Heart right ventricle (tissue), 16 donors: ENCODE measurements at regions of chr5 and their contacts with region 1.

Region 1: DNA sequence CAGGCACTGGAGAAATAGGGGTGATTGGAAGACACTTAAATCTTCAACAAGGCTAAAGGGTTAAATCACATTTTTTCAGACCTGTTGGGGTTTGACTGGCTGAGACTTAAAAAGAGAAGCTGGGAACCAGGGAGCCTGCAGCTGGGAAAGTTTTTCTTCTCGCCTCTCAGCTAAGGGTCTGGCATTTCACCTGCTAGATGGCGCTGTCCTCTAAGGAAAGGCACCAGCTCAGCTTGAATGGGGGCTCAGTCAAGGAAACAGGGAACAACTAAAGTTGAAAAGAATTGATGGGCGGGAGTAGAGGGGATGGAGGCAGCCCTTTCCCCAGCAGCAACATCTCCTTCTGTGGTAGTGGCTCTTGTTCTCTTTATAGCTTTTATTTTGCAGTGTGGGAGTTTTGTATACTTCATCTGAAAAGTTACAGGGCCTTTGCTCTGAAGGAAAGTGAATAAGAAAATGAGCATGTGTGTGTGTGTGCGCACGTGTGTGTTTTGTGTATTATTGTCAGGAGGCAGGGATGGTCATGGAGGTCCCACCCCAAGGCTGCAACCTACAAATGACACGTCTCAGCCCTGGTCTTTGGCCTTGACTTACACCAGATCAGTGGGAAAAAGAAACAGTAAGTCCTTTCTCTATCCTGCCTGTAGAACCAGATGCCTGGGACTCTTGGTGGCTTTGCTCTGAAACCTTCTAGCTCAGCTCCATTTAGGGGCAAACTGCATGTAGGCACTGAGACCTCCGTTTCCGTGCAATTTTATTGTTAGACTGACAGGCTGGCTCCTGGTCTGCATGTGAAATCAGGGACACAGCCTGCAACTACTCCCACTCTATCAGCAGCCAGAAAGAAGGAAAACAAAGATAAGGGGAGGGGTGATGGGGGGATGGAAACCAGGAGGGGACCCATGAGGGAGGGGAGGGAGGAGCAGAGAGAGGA is 316.2 kb upstream of the CLINT1 start:
- DNase-seq: peak; percentile 62 to 87
- ATAC-seq: peak; percentile 75 to 95 (median 92)
- H3K4me3 ChIP-seq: no peak overlapping the region
- H3K27ac ChIP-seq: peak overlapping the region in 9 of 10 donors; percentile 4 to 80 (median 69)
- H3K4me1 ChIP-seq: peaks cover 0 to 27% (median 14%) of the 10 kb centered on the region in 9 donors
- H3K27me3 ChIP-seq: no peaks in the 10 kb centered on the region
- CTCF ChIP-seq: peak; percentile 55 to 89 (median 81)

Region 2: DNA sequence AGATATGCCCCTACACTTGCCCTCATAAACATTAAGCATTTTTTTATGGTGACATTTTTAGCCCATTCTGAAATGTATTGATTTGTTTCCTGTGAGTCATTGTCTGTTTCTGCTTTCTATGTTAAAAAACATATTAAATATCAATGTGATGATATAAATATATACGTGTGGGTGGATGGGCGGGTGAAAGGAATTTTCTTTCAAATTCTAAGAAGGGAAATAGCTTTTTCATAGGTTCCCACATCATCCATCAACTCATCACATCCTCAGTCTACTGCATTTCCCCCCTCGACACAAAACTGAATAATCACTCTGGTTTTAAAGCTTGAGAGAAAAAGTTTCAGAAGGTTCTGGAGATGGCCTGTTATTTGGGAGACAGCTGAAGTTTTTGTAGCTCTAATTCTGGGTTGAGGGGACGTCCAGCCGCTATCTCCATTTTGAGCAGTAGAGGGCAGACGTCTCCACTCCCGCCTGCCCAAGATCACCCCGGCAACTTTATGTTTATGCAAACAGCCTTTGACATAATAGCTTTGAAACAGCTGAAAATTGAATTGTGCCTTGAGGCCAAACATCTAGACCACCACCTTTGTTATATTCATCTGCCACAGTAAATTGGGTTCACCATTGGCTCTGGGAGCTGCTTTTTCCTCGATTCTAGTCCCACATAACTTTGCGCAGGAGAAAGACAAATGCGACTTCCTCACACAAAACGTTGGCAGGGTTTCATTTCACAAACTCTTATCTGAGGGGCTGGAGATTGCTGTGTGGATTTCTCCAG is 100.0 kb before region 1 on chr5:
- intact Hi-C with region 1: loop called in 1 of 10 experiments (anchors 5 kb)
- DNase-seq: peak; percentile 28 to 62
- ATAC-seq: peak; percentile 59 to 92 (median 82)
- H3K4me3 ChIP-seq: peak overlapping the region in 8 of 10 donors; percentile 17 to 43 (median 32)
- H3K27ac ChIP-seq: peak overlapping the region in 8 of 10 donors; percentile 15 to 78 (median 52)
- H3K4me1 ChIP-seq: peaks cover 0 to 16% (median 3%) of the 10 kb centered on the region in 9 donors
- H3K27me3 ChIP-seq: no peaks in the 10 kb centered on the region
- CTCF ChIP-seq: peak; percentile 67 to 92 (median 85)

Region 3: GRCh38 chr5:158414780-158415179 is 239.6 kb after region 1 on chr5:
- intact Hi-C with region 1: loop called in 2 of 10 experiments (anchors 5 to 10 kb)
- DNase-seq: peak in 1 of 2 donors; percentile 35
- ATAC-seq: peak; percentile 71 to 91 (median 83)
- H3K4me3 ChIP-seq: no peak overlapping the region
- H3K27ac ChIP-seq: peak overlapping the region in 9 of 10 donors; percentile 1 to 60 (median 48)
- H3K4me1 ChIP-seq: peaks cover 0 to 22% (median 13%) of the 10 kb centered on the region in 9 donors
- H3K27me3 ChIP-seq: no peaks in the 10 kb centered on the region
- CTCF ChIP-seq: no peak

Region 4: DNA sequence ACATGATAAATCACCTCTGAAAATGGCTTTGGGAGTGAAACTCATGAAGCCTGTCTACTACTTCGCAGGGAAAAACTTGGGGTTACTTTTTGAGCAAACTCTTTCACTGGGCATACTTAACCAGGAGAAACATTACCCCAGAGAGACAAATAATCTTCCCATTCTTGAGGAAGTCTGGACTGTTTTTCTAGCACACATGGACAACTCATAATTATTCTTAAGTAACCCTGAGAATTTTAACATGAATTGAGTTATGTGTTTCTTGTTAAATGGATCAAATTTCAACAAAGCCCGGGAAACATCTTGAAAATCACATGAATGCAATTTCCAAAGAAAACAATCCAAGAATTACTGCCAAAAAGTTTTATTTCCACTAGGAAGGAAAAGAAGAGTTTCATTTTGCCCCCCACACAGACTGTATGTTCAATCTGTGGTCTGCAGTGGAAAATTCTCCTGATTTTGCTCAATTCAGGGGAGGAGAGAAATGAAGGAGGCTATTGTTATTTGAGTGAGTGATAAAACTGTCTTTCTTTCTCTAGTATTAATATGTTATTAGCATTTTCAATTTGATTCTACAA is 248.5 kb after region 1 on chr5:
- intact Hi-C with region 1: loop called in 2 of 10 experiments (anchors 5 to 10 kb)
- DNase-seq: no peak
- ATAC-seq: peak in 6 of 8 donors; percentile 48 to 73 (median 62)
- H3K4me3 ChIP-seq: no peak overlapping the region
- H3K27ac ChIP-seq: peak overlapping the region in 9 of 10 donors; percentile 45 to 84 (median 78)
- H3K4me1 ChIP-seq: peaks cover 0 to 43% (median 22%) of the 10 kb centered on the region in 9 donors
- H3K27me3 ChIP-seq: no peaks in the 10 kb centered on the region
- CTCF ChIP-seq: no peak

Region 5: GRCh38 chr5:158553195-158553961 is 378.2 kb after region 1 on chr5:
- intact Hi-C with region 1: loop called in 1 of 10 experiments (anchors 10 kb)
- DNase-seq: peak in 1 of 2 donors; percentile 33
- ATAC-seq: peak; percentile 27 to 78 (median 62)
- H3K4me3 ChIP-seq: no peak overlapping the region
- H3K27ac ChIP-seq: peak overlapping the region in 9 of 10 donors; percentile 42 to 73 (median 63)
- H3K4me1 ChIP-seq: peaks cover 0 to 21% (median 0%) of the 10 kb centered on the region in 9 donors
- H3K27me3 ChIP-seq: no peaks in the 10 kb centered on the region
- CTCF ChIP-seq: no peak

Region 6: GRCh38 chr5:159133041-159133741 is 958.0 kb after region 1 on chr5:
- intact Hi-C with region 1: loop called in 2 of 10 experiments (anchors 2 to 5 kb)
- DNase-seq: peak in 1 of 2 donors; percentile 16
- ATAC-seq: peak; percentile 37 to 77 (median 52)
- H3K4me3 ChIP-seq: peak overlapping the region in 4 of 10 donors; percentile 15 to 37 (median 22)
- H3K27ac ChIP-seq: peak overlapping the region in 1 of 10 donors; percentile 15
- H3K4me1 ChIP-seq: no peaks in the 10 kb centered on the region
- H3K27me3 ChIP-seq: peaks cover 0 to 12% (median 0%) of the 10 kb centered on the region in 7 donors
- CTCF ChIP-seq: peak; percentile 70 to 88 (median 83)